ENCODE measurements at regions of chr19 and their contacts with region 1.

Region 1: GRCh38 chr19:4759388-4760284 is 31.9 kb upstream of the FEM1A start:
- DNase-seq: peak; percentile 79
- ATAC-seq: peak; percentile 98
- H3K4me3 ChIP-seq: peak overlapping the region; percentile 57; the same call in 1 of the 2 replicates
- H3K27ac ChIP-seq: no peak overlapping the region
- H3K4me1 ChIP-seq: peaks cover 6% of the 10 kb centered on the region
- H3K27me3 ChIP-seq: peaks cover 6% of the 10 kb centered on the region; the same call in 1 of the 2 replicates
- CTCF ChIP-seq: no peak

Region 2: DNA sequence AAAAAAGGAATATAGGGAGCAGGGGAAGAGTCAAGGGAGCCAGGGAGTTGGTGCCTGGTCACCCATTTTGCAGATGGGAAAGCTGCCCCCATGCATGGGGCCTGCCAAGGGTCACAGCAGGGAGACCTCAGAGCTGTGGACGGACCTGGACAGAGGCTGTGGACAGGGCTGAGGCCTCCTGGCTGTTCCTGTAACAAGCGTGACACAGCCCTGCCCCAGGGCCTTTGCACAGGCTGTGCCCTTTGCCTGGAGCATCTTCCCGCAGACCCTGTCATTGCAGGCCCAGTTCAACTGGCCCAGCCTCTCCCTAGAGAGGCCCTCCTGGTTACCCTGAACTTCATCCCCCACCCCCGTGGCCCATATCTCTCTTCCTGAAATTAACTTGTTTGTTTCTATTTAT is 113.9 kb before region 1 on chr19:
- CTCF ChIA-PET with region 1: interaction called, 14 read pairs
- POLR2A ChIA-PET with region 1: no interaction called
- intact Hi-C with region 1: no loop called
- DNase-seq: no peak
- ATAC-seq: no peak
- H3K4me3 ChIP-seq: no peak overlapping the region
- H3K27ac ChIP-seq: no peak overlapping the region
- H3K4me1 ChIP-seq: peaks cover 3% of the 10 kb centered on the region
- H3K27me3 ChIP-seq: no peaks in the 10 kb centered on the region
- CTCF ChIP-seq: no peak